HEK293T (cell line): ENCODE measurements at regions of chr19 and their contacts with region 1.

Region 1: GRCh38 chr19:40750059-40750873 is at the start of gene ACTMAP:
- DNase-seq: peak; percentile 99

Region 2: GRCh38 chr19:40542202-40542859 is 207.9 kb before region 1 on chr19:
- CTCF ChIA-PET with region 1: interaction called, 10 read pairs
- POLR2A ChIA-PET with region 1: no interaction called
- DNase-seq: no peak

Region 3: GRCh38 chr19:40616941-40617340 is 133.3 kb before region 1 on chr19:
- CTCF ChIA-PET with region 1: no interaction called
- POLR2A ChIA-PET with region 1: no interaction called
- DNase-seq: no peak

Region 4: GRCh38 chr19:40716655-40717324 is 33.5 kb before region 1 on chr19 and contains the starts of genes COQ8B and ITPKC:
- CTCF ChIA-PET with region 1: no interaction called
- POLR2A ChIA-PET with region 1: interaction called, 28 read pairs
- DNase-seq: peak; percentile 96

Region 5: GRCh38 chr19:40777937-40778705 is 27.9 kb after region 1 on chr19 and contains the start of gene RAB4B:
- CTCF ChIA-PET with region 1: interaction called, 3 read pairs
- POLR2A ChIA-PET with region 1: interaction called, 55 read pairs
- DNase-seq: peak; percentile 95

Region 6: DNA sequence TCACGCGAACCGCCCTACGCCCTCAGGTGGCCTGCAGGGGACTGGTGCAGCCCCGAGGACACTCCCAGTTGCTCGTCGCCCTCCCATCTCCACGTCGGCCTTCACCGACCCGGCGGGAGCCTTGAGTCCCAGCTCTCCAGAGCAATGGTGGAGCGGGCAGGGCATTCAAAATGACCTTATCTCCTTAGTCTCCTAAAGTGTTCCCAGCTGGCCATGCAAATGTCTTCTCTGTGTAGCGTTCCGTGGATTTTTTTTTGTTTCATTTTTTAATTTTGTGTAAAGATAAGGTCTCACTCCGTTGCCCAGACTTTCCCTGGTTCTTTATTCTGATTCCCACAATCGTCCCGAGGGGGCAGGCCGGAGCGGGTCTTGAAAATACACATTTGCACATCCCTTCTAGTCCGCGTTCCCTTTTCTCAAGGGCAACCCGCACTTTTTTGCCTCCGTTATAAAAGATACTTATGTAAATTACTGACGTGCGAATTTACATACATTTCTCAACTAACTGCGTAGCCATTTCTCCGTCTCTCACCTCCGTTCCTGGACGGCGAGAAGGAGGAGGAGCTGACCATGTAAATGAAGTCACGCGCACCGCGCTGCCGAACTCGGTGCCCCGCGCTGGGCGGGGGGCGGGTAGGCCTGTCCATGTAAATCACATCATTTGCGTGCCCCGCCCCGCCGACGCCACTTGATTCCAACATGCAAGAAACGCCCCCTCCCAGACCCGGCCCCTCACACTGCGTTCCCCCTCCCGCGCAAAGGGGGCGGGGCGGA is 48.1 kb after region 1 on chr19:
- CTCF ChIA-PET with region 1: no interaction called
- POLR2A ChIA-PET with region 1: interaction called, 32 read pairs
- DNase-seq: peak; percentile 98